ENCODE measurements at regions of chr17 and their contacts with region 1.

Region 1: DNA sequence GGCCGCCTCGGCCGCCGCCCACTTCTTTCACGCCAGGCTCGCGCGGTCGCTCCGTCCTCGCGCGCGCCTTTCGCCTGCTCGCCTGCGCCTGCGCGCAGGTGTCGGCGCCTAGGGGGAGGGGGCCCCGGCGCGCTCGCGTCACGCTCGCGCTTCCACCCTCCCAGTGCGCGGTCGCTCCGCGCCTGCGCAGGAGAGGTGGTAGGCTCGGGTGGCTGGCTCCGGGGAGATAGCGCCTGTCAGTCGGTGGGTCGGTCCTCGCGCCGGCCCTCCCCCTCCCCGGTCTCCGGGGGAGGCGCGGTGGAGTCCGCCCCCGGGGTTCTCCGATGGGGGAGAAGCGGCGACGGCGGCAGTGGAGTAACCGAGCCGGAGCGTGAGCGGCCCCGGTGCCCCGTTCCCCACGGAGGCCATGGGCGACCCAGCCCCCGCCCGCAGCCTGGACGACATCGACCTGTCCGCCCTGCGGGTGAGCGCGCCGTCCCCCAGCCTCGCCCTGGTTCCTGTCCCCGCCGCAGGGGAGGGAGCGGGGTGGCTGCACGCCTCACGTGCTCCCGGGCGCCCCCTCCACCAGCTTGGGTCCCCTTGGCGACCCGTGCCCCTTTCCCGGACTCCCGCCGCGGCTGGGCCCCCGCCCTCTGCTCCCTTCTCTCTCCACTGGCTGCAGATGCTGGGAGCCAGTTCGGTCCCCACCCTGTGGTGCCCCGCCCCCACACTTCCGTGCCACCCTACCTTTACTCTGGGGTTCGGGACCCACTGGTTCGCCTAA is at the start of gene MINK1:
- DNase-seq: peak; percentile 85 to 93
- ATAC-seq: peak; percentile 96 to 98 (median 97)
- H3K4me3 ChIP-seq: peak within 1 kb of the TSS; percentile 67 to 99 (median 90)
- H3K27ac ChIP-seq: peak within 1 kb of the TSS; percentile 64 to 97 (median 92)
- H3K4me1 ChIP-seq: peaks cover 10 to 49% (median 46%) of the 10 kb centered on the region in 9 donors
- H3K27me3 ChIP-seq: no peaks in the 10 kb centered on the region
- CTCF ChIP-seq: no peak
- total RNA-seq, gene MINK1: 26.4 to 54.1 (median 33.5) TPM

Region 2: GRCh38 chr17:4074831-4075495 is 758.4 kb before region 1 on chr17:
- intact Hi-C with region 1: no loop called
- DNase-seq: no peak
- ATAC-seq: peak; percentile 25 to 70 (median 56)
- H3K4me3 ChIP-seq: no peak overlapping the region
- H3K27ac ChIP-seq: peak overlapping the region in 2 of 10 donors; percentile 3 to 7
- H3K4me1 ChIP-seq: peaks cover 0 to 22% (median 4%) of the 10 kb centered on the region in 9 donors
- H3K27me3 ChIP-seq: no peaks in the 10 kb centered on the region
- CTCF ChIP-seq: peak; percentile 30 to 73 (median 61)

Region 3: GRCh38 chr17:4771519-4772234 is 61.7 kb before region 1 on chr17 and contains the start of gene TM4SF5:
- intact Hi-C with region 1: no loop called
- DNase-seq: no peak
- ATAC-seq: peak in 1 of 8 donors; percentile 22
- H3K4me3 ChIP-seq: no peak within 1 kb of the TSS
- H3K27ac ChIP-seq: peak within 1 kb of the TSS in 1 of 10 donors; percentile 69
- H3K4me1 ChIP-seq: peaks cover 0 to 21% (median 0%) of the 10 kb centered on the region in 9 donors
- H3K27me3 ChIP-seq: peaks cover 0 to 22% (median 8%) of the 10 kb centered on the region in 7 donors
- CTCF ChIP-seq: no peak
- total RNA-seq, gene TM4SF5: not detected

Region 4: GRCh38 chr17:4796553-4796921 is 36.8 kb before region 1 on chr17:
- intact Hi-C with region 1: loop called in 4 of 10 experiments (anchors 2 to 5 kb)
- DNase-seq: no peak
- ATAC-seq: peak; percentile 14 to 61 (median 43)
- H3K4me3 ChIP-seq: peak overlapping the region; percentile 53 to 91 (median 76)
- H3K27ac ChIP-seq: peak overlapping the region in 9 of 10 donors; percentile 57 to 92 (median 78)
- H3K4me1 ChIP-seq: peaks cover 0 to 17% (median 9%) of the 10 kb centered on the region in 9 donors
- H3K27me3 ChIP-seq: no peaks in the 10 kb centered on the region
- CTCF ChIP-seq: no peak

Region 5: DNA sequence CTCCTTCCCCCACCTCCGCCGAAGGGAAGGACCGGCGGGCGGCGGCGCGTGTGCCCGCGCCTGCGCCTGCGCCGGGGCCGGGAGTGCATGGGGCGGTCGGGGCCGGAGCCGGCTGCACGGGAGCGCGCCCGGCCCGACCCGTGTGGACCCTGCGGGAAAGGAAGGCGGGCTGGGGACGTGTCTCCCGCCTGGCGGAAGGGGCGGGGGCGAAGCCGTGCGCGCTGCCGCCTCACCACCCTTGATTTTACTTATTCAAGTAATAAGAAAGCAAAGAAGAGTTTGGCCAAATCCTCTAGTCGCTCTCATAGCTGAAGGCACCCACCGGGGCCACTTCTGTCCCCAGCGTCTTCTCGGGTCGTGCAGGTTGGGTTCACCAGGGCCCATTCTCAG is 115.6 kb after region 1 on chr17:
- intact Hi-C with region 1: no loop called
- DNase-seq: peak; percentile 83 to 87
- ATAC-seq: peak; percentile 72 to 87 (median 82)
- H3K4me3 ChIP-seq: peak overlapping the region; percentile 32 to 100 (median 98)
- H3K27ac ChIP-seq: peak overlapping the region; percentile 89 to 100 (median 99)
- H3K4me1 ChIP-seq: peaks cover 18 to 76% (median 51%) of the 10 kb centered on the region in 9 donors
- H3K27me3 ChIP-seq: no peaks in the 10 kb centered on the region
- CTCF ChIP-seq: no peak

Measured in heart right ventricle (tissue), 16 donors.